Activated CD4-positive, alpha-beta T cell treated with anti-CD3 and anti-CD28 coated beads, Interleukin-2, amount 10 ng/mL, durations not matched to agents 24 days and 14 days (primary cell): ENCODE measurements at regions of chr6 and their contacts with region 1.

Region 1: GRCh38 chr6:115896538-115897129 is 164.1 kb downstream of the FRK start:
- DNase-seq: no peak
- H3K4me3 Mint-ChIP-seq: no peak overlapping the region
- H3K27ac Mint-ChIP-seq: no peak overlapping the region
- H3K4me1 Mint-ChIP-seq: peaks cover 5% of the 10 kb centered on the region
- H3K27me3 Mint-ChIP-seq: peaks cover 3% of the 10 kb centered on the region

Region 2: GRCh38 chr6:114096561-114097172 is 1800.0 kb before region 1 on chr6:
- intact Hi-C with region 1: loop called (anchors 5 kb)
- DNase-seq: peak; percentile 62
- H3K4me3 Mint-ChIP-seq: no peak overlapping the region
- H3K27ac Mint-ChIP-seq: no peak overlapping the region
- H3K4me1 Mint-ChIP-seq: no peaks in the 10 kb centered on the region
- H3K27me3 Mint-ChIP-seq: peaks cover 4% of the 10 kb centered on the region

Region 3: DNA sequence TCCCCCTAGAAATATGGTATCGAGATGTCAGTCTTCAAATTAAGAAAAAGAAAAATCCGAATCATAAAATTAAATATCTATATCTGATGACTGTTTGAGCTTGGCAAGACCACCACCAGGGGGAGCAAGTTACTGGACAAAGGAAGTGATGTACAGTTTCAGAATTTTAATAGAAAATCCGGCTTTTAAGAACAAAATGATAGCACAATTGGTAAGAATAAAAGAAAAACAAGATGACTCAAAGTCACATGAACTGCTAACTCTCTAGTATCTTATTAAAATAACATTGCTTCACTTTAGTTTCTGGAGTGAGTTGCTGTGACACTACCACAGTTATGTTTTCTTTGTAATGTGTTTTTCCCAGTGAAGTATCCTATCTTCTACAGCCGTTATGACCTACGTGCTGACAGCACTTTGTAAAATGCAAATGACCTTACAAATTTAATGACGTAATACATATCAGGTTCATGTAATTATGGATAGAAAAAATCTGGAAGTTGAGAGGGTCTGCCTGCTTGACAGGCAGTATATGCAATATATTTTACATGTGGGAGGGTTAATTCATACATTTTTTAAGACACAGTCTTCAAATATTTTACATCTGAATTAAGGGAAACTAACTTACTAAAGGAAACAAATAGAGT is 1148.5 kb before region 1 on chr6:
- intact Hi-C with region 1: loop called (anchors 1 kb)
- DNase-seq: peak; percentile 69
- H3K4me3 Mint-ChIP-seq: no peak overlapping the region
- H3K27ac Mint-ChIP-seq: no peak overlapping the region
- H3K4me1 Mint-ChIP-seq: no peaks in the 10 kb centered on the region
- H3K27me3 Mint-ChIP-seq: no peaks in the 10 kb centered on the region

Region 4: DNA sequence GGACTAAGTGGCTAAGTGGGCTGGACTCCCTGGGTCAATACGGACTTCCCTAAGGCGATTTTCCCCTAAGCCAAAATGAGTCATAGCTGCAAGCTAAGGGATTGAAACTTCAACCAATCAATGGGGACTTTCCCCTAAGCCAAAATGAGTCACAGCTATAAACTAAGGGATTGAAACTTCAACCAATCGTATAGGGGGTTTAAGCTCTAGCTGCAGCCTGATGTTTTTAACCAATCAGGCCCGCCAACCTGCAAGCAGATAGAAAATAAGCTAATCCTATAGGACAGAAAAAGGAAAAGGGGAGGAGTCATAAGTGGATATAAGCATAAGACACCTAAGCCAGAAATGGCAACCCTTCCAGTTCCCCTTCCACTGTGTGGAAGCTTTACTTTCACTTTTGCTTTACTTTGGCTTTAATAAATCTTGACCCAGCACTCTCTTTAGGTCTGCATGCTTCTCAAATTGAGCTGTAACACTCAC is 898.8 kb before region 1 on chr6:
- intact Hi-C with region 1: loop called (anchors 10 kb)
- DNase-seq: no peak
- H3K4me3 Mint-ChIP-seq: no peak overlapping the region
- H3K27ac Mint-ChIP-seq: peak overlapping the region; percentile 78
- H3K4me1 Mint-ChIP-seq: peaks cover 5% of the 10 kb centered on the region
- H3K27me3 Mint-ChIP-seq: no peaks in the 10 kb centered on the region

Region 5: GRCh38 chr6:115663681-115664080 is 233.0 kb before region 1 on chr6:
- intact Hi-C with region 1: no loop called
- DNase-seq: no peak
- H3K4me3 Mint-ChIP-seq: no peak overlapping the region
- H3K27ac Mint-ChIP-seq: no peak overlapping the region
- H3K4me1 Mint-ChIP-seq: no peaks in the 10 kb centered on the region
- H3K27me3 Mint-ChIP-seq: no peaks in the 10 kb centered on the region

Region 6: GRCh38 chr6:116217069-116217468 is 320.4 kb after region 1 on chr6:
- intact Hi-C with region 1: no loop called
- DNase-seq: no peak
- H3K4me3 Mint-ChIP-seq: no peak overlapping the region
- H3K27ac Mint-ChIP-seq: no peak overlapping the region
- H3K4me1 Mint-ChIP-seq: no peaks in the 10 kb centered on the region
- H3K27me3 Mint-ChIP-seq: no peaks in the 10 kb centered on the region

Region 7: GRCh38 chr6:116229287-116229913 is 332.8 kb after region 1 on chr6:
- intact Hi-C with region 1: no loop called
- DNase-seq: peak; percentile 73
- H3K4me3 Mint-ChIP-seq: no peak overlapping the region
- H3K27ac Mint-ChIP-seq: no peak overlapping the region
- H3K4me1 Mint-ChIP-seq: no peaks in the 10 kb centered on the region
- H3K27me3 Mint-ChIP-seq: no peaks in the 10 kb centered on the region